ENCODE measurements at regions of chr6 and their contacts with region 1.

Region 1: GRCh38 chr6:166104107-166104506 is 63.5 kb downstream of the TBXT start:
- DNase-seq: no peak
- ATAC-seq: no peak
- H3K4me3 ChIP-seq: no peak overlapping the region
- H3K27ac ChIP-seq: no peak overlapping the region
- H3K4me1 ChIP-seq: no peaks in the 10 kb centered on the region
- H3K27me3 ChIP-seq: no peaks in the 10 kb centered on the region
- CTCF ChIP-seq: no peak
- POLR2A ChIP-seq: no peak

Region 2: DNA sequence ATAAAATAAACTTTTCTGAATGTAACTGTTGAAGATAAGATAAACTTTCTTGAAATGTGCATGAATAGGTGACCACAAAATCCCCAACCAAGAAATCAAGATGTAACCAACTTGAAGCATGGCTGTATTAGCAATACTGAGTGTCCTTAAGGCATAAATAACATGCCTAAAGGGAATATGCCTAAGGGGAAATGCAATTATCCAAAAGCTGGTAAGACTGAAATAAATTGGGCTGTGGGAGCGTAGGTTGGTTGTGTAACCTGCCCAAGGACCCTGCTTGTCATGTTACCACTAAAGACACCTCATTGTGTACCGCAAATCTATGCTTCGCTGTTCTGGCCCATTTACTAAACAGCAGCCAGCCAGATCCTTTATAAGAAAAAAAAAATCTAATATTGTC is 240.3 kb before region 1 on chr6:
- intact Hi-C with region 1: no loop called
- DNase-seq: no peak
- ATAC-seq: no peak
- H3K4me3 ChIP-seq: no peak overlapping the region
- H3K27ac ChIP-seq: no peak overlapping the region
- H3K4me1 ChIP-seq: no peaks in the 10 kb centered on the region
- H3K27me3 ChIP-seq: no peaks in the 10 kb centered on the region
- CTCF ChIP-seq: no peak
- POLR2A ChIP-seq: no peak

Region 3: DNA sequence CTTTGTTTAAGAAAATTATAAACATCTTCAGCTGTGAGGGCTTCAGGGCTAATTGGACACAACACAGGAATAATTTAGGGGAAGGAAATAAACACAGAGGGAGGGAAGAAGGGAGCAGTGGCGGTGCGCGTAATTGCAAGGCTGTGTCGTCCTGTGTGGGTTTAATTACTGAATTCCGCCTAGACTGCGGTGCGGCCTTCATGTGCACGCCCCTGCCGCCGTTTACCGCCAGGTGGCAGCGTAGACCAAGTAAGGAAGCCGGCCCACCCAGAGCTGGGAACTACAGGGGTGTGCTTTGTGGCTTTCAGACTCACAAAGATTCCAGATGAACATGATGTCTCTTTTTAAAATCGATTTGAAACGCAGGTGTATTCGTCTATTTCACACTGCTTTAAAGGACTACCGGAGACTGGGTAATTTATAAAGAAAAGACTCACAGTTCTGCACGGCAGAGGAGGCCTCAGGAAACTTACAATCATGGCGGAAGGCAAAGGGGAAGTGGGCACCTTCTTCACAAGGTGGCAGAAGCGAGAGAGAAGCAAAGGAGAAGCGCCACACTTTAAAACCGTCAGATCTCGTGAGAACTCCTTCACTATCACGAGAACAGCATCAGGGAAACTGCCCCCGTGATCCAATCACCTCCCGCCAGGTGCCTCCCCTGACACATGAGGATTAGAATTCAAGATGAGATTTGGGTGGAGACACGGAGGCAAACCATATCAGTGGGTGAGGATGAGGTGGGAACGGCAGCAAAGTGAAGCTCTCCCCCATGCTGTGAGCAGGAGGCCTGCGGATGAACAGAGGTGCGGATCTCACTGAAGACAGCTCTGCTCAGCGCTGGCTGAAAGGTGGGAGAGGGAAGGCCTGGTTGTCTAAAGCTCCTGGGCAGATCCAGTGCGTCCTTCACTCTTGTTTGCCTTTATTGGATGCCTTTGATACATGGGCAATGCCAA is 219.0 kb before region 1 on chr6:
- intact Hi-C with region 1: loop called (anchors 5 kb)
- DNase-seq: peak; percentile 70 to 85 (median 76)
- ATAC-seq: peak; percentile 86
- H3K4me3 ChIP-seq: no peak overlapping the region
- H3K27ac ChIP-seq: no peak overlapping the region
- H3K4me1 ChIP-seq: no peaks in the 10 kb centered on the region
- H3K27me3 ChIP-seq: no peaks in the 10 kb centered on the region
- CTCF ChIP-seq: peak; percentile 76 to 91 (median 85)
- POLR2A ChIP-seq: no peak

Measured in body of pancreas (tissue), 4 donors.